GM23248 (cell line): ENCODE measurements at regions of chr12 and their contacts with region 1.

Region 1: GRCh38 chr12:121697098-121697698 is 15.4 kb upstream of the TMEM120B start:
- DNase-seq: peak; percentile 67
- H3K4me3 ChIP-seq: no peak overlapping the region
- H3K27ac ChIP-seq: no peak overlapping the region
- H3K4me1 ChIP-seq: no peaks in the 10 kb centered on the region
- H3K27me3 ChIP-seq: no peaks in the 10 kb centered on the region

Region 2: GRCh38 chr12:121793838-121794533 is 96.8 kb after region 1 on chr12:
- in situ Hi-C with region 1: loop called (anchors 5 kb)
- DNase-seq: peak; percentile 98
- H3K4me3 ChIP-seq: peak overlapping the region; percentile 73
- H3K27ac ChIP-seq: peak overlapping the region; percentile 86
- H3K4me1 ChIP-seq: peaks cover 31% of the 10 kb centered on the region
- H3K27me3 ChIP-seq: no peaks in the 10 kb centered on the region

Region 3: DNA sequence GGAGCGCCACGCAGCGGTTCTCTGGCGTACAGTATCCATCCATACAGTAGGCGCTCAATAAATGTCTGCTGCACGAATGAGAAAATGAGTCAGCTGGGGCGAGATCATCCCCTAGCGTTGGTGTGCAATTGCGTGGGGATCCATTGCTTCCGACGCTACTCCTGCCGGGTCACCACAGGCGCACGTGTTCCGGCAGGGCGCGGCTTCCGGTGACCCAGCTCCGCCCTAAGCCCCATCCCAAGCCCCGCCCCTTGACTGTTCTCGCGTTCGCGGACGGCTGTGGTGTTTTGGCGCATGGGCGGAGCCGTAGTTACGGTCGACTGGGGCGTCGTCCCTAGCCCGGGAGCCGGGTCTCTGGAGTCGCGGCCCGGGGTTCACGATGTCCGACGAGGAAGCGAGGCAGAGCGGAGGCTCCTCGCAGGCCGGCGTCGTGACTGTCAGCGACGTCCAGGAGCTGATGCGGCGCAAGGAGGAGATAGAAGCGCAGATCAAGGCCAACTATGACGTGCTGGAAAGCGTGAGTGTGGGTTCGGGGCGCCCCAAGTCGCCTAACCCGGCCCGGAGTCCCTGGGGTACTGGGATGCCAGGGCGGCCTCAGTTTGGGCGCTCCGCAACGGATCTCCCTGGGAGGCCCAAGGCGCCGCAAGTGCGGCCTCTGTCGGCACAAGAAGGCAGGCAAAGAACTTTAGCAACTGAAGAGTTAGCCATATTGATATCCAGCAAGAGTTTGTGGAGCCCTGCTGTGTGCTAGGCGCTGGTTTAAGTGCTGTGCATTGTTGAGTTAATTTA is 191.5 kb after region 1 on chr12 and contains the start of gene PSMD9:
- in situ Hi-C with region 1: loop called (anchors 10 kb)
- DNase-seq: peak; percentile 99
- H3K4me3 ChIP-seq: peak within 1 kb of the TSS; percentile 89
- H3K27ac ChIP-seq: peak within 1 kb of the TSS; percentile 96
- H3K4me1 ChIP-seq: peaks cover 10% of the 10 kb centered on the region
- H3K27me3 ChIP-seq: no peaks in the 10 kb centered on the region
- total RNA-seq, gene PSMD9: 93.7 and 134 TPM in 2 replicates

Region 4: GRCh38 chr12:122366685-122367475 is 669.7 kb after region 1 on chr12:
- in situ Hi-C with region 1: no loop called
- DNase-seq: peak; percentile 98
- H3K4me3 ChIP-seq: peak overlapping the region; percentile 34
- H3K27ac ChIP-seq: peak overlapping the region; percentile 91
- H3K4me1 ChIP-seq: peaks cover 41% of the 10 kb centered on the region
- H3K27me3 ChIP-seq: no peaks in the 10 kb centered on the region